ENCODE measurements at regions of chr14 and their contacts with region 1.

Region 1: DNA sequence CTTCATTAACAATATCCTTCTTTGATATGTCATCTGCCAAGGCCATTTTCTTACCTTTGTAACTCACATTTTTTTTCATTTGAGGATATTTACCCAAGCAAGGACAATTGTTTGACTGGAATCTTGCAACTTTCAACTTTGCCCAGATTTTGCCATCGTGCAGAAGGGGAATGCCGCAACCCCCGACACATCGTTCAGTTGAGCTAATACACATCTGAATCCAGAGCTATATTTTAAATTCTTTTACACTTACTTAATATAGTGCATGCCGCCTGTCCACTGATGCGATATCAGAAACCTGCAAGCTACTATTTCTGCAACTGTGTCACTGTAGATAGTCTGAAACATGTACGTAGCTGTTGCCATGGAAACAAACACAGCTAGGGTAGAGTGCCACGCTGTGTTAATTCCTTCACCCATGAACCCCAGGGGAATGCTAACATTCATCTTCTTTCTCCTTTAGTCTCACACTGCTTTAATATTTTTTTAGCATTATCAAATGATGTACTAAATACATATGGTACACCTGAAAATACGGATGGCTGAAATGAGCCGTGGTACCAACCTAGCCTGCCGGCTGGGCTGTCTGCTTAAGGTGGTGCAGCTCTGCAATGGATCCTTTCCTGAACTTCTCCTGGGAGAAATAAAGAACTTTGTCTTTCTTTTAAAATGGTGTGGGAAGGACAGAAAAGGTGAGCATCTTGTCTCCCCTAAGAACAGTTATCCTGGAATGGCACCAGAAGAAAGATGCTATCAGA is 77.0 kb upstream of the FOXN3 start:
- DNase-seq: peak; percentile 92
- ATAC-seq: peak; percentile 99
- H3K4me3 ChIP-seq: peak overlapping the region in 4 of 5 experiments; percentile 3 to 46 (median 22)
- H3K4me3 Mint-ChIP-seq: peak overlapping the region; percentile 74
- H3K27ac ChIP-seq: peak overlapping the region; percentile 35 to 77
- H3K27ac Mint-ChIP-seq: peak overlapping the region; percentile 76
- H3K4me1 ChIP-seq: peaks cover 20 to 21% of the 10 kb centered on the region in 2 donors
- H3K4me1 Mint-ChIP-seq: peaks cover 29% of the 10 kb centered on the region
- H3K27me3 ChIP-seq: no peaks in the 10 kb centered on the region
- H3K27me3 Mint-ChIP-seq: no peaks in the 10 kb centered on the region
- CTCF ChIP-seq: no peak

Region 2: GRCh38 chr14:89445273-89445973 is 48.6 kb before region 1 on chr14:
- CTCF ChIA-PET with region 1: interaction called, 3 read pairs
- POLR2A ChIA-PET with region 1: no interaction called
- intact Hi-C with region 1: loop called (anchors 2 kb)
- DNase-seq: peak; percentile 40
- ATAC-seq: peak; percentile 50
- H3K4me3 ChIP-seq: no peak overlapping the region
- H3K4me3 Mint-ChIP-seq: peak overlapping the region; percentile 45
- H3K27ac ChIP-seq: peak overlapping the region; percentile 71 to 89
- H3K27ac Mint-ChIP-seq: peak overlapping the region; percentile 75
- H3K4me1 ChIP-seq: peaks cover 61 to 70% of the 10 kb centered on the region in 2 donors
- H3K4me1 Mint-ChIP-seq: peaks cover 74% of the 10 kb centered on the region
- H3K27me3 ChIP-seq: no peaks in the 10 kb centered on the region
- H3K27me3 Mint-ChIP-seq: no peaks in the 10 kb centered on the region
- CTCF ChIP-seq: no peak

Region 3: GRCh38 chr14:89509891-89510290 is 15.8 kb after region 1 on chr14:
- CTCF ChIA-PET with region 1: no interaction called
- POLR2A ChIA-PET with region 1: no interaction called
- intact Hi-C with region 1: loop called (anchors 2 kb)
- DNase-seq: no peak
- ATAC-seq: no peak
- H3K4me3 ChIP-seq: no peak overlapping the region
- H3K4me3 Mint-ChIP-seq: peak overlapping the region; percentile 83
- H3K27ac ChIP-seq: peak overlapping the region; percentile 14 to 77
- H3K27ac Mint-ChIP-seq: peak overlapping the region; percentile 92
- H3K4me1 ChIP-seq: peaks cover 19 to 23% of the 10 kb centered on the region in 2 donors
- H3K4me1 Mint-ChIP-seq: peaks cover 41% of the 10 kb centered on the region
- H3K27me3 ChIP-seq: no peaks in the 10 kb centered on the region
- H3K27me3 Mint-ChIP-seq: no peaks in the 10 kb centered on the region
- CTCF ChIP-seq: no peak

Region 4: GRCh38 chr14:89618811-89619551 is 124.9 kb after region 1 on chr14:
- CTCF ChIA-PET with region 1: no interaction called
- POLR2A ChIA-PET with region 1: no interaction called
- intact Hi-C with region 1: loop called (anchors 2 kb)
- DNase-seq: peak; percentile 81
- ATAC-seq: peak; percentile 72
- H3K4me3 ChIP-seq: peak overlapping the region; percentile 61 to 93 (median 86)
- H3K4me3 Mint-ChIP-seq: peak overlapping the region; percentile 92
- H3K27ac ChIP-seq: peak overlapping the region in 1 of 2 donors; percentile 71
- H3K27ac Mint-ChIP-seq: peak overlapping the region; percentile 86
- H3K4me1 ChIP-seq: peaks cover 51 to 55% of the 10 kb centered on the region in 2 donors
- H3K4me1 Mint-ChIP-seq: peaks cover 66% of the 10 kb centered on the region
- H3K27me3 ChIP-seq: no peaks in the 10 kb centered on the region
- H3K27me3 Mint-ChIP-seq: no peaks in the 10 kb centered on the region
- CTCF ChIP-seq: no peak